Activated T-helper 1 cell treated with anti-CD3 and anti-CD28 coated beads, Interleukin-12 subunit alpha, Interleukin-12 subunit beta, Interleukin-2, Interleukin-4 antibody, amounts not matched to agents 30 ng/mL and 10 ng/mL and 1 ng/mL, durations not matched to agents 14 hours and 24 hours and 36 hours (primary cell): ENCODE measurements at regions of chr18 and their contacts with region 1.

Region 1: GRCh38 chr18:74116633-74117554 is 30.7 kb downstream of the FBXO15 start:
- DNase-seq: no peak
- H3K4me3 Mint-ChIP-seq: no peak overlapping the region
- H3K27ac Mint-ChIP-seq: no peak overlapping the region
- H3K4me1 Mint-ChIP-seq: peaks cover 8% of the 10 kb centered on the region
- H3K27me3 Mint-ChIP-seq: peaks cover 2% of the 10 kb centered on the region

Region 2: GRCh38 chr18:73136134-73136533 is 980.8 kb before region 1 on chr18:
- intact Hi-C with region 1: no loop called
- DNase-seq: no peak
- H3K4me3 Mint-ChIP-seq: no peak overlapping the region
- H3K27ac Mint-ChIP-seq: no peak overlapping the region
- H3K4me1 Mint-ChIP-seq: no peaks in the 10 kb centered on the region
- H3K27me3 Mint-ChIP-seq: no peaks in the 10 kb centered on the region

Region 3: GRCh38 chr18:73549236-73549635 is 567.7 kb before region 1 on chr18:
- intact Hi-C with region 1: no loop called
- DNase-seq: no peak
- H3K4me3 Mint-ChIP-seq: no peak overlapping the region
- H3K27ac Mint-ChIP-seq: no peak overlapping the region
- H3K4me1 Mint-ChIP-seq: no peaks in the 10 kb centered on the region
- H3K27me3 Mint-ChIP-seq: no peaks in the 10 kb centered on the region

Region 4: DNA sequence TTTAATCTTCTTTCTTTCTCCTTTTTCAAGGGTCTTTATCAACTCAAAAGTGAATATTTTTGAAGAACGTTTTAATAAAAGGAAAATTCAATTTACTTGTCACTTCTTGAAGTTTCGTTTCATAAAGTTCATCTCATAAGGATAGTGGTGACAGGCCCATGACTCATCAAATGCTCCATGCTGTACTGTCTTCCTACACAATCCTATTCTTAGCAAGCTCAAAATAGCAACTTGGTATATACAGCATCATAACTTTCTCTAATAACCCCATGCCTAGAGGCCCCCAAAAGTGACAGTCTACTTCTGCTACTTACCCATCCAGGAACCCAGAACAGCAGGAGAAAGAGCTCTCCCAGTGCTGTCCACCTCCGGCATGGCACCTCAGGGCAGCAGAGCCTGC is 23.0 kb after region 1 on chr18:
- intact Hi-C with region 1: loop called (anchors 2 kb)
- DNase-seq: no peak
- H3K4me3 Mint-ChIP-seq: peak overlapping the region; percentile 59
- H3K27ac Mint-ChIP-seq: peak overlapping the region; percentile 93
- H3K4me1 Mint-ChIP-seq: peaks cover 44% of the 10 kb centered on the region
- H3K27me3 Mint-ChIP-seq: peaks cover 5% of the 10 kb centered on the region